GM10248 (cell line): ENCODE measurements at regions of chr12 and their contacts with region 1.

Region 1: GRCh38 chr12:15899282-15899870 is 11.8 kb upstream of the DERA start:
- DNase-seq: no peak
- CTCF ChIP-seq: peak; percentile 52

Region 2: DNA sequence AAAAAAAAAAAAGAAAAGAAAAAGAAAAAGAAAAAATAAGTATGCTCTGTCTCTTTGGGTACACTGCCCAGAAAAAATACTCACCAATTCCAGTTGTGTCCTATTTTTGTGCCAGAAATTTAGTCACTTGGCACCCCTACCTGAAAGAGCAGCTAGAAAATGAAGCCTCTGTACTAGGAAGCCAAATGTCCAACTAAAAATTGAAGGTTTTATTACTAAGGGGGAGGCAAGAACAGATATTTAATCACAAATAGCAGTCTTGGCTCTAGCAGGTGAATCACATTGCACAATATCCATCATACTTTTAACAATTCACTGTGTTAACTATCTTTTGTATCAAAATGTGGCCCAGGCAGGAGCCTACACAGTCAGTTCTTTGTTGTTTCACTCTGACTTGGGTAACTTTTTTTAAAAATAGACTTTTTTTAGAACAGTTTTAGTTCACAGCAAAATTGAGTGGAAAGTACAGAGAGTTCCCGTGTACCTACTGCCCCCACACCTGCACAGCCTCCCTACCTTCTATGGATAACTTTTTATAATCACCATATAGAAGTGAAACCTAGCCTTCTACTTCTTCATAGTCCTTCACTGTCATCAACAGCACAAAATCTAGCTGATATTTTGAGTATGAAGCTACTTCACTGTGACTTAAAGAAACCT is 1621.0 kb before region 1 on chr12:
- CTCF ChIA-PET with region 1: no interaction called
- POLR2A ChIA-PET with region 1: interaction called, 12 read pairs
- DNase-seq: peak; percentile 45
- CTCF ChIP-seq: no peak

Region 3: DNA sequence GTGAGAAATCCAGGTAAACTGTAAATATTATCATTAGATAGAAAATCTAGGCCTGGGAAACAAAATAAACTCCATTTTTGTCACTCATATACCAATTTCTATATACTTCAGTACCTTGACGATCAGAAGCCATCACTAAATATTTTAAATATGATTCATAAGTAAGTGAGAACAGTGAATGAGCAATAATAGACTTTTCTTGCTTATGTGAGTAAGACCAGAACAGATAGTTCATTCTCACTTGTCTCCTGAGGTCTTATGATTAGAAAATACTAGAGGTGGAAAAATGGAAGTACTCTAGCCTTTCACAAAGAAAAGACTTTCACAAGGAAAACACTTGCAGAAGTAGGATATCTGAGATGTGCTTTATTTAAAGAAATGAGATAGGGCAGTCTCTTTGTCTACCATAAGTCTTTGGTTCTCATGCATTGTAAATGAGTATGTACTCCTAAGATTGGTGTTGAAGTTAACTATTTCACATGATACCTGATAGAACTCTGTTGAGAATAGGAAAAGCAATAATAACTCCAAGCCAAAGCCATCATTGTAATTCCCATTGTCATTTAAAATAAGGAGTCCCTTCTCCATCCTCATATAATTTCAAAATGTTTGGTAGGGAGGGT is 1075.3 kb before region 1 on chr12:
- CTCF ChIA-PET with region 1: no interaction called
- POLR2A ChIA-PET with region 1: no interaction called
- DNase-seq: no peak
- CTCF ChIP-seq: no peak

Region 4: DNA sequence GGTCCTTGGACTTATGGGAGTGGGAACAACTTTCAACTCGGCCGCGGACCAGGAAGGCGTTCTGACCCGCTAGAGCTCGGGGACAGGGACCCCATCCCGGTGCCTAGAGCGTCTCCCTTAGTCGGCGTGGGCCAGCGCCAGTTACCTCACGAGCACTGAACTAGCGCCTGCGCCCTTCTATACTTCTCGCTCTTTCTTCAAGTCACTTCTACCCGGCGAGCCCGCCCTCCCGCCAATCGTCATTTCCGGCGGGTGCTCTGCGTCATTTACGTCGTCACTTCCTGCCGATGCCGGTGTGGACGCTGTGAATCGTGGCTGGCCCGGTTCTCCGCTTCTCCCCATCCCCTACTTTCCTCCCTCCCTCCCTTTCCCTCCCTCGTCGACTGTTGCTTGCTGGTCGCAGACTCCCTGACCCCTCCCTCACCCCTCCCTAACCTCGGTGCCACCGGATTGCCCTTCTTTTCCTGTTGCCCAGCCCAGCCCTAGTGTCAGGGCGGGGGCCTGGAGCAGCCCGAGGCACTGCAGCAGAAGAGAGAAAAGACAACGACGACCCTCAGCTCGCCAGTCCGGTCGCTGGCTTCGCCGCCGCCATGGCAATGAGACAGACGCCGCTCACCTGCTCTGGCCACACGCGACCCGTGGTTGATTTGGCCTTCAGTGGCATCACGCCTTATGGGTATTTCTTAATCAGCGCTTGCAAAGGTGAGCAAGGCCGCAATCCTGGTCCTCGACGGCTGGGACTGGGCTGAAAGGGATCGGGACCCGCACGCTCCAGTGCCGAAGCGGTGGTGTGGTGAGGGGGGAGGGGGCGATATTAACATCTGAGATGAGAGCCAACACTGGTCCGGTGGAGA is 17.0 kb before region 1 on chr12 and contains the start of gene STRAP:
- CTCF ChIA-PET with region 1: interaction called, 97 read pairs
- POLR2A ChIA-PET with region 1: interaction called, 3 read pairs
- DNase-seq: peak; percentile 96
- CTCF ChIP-seq: no peak

Region 5: DNA sequence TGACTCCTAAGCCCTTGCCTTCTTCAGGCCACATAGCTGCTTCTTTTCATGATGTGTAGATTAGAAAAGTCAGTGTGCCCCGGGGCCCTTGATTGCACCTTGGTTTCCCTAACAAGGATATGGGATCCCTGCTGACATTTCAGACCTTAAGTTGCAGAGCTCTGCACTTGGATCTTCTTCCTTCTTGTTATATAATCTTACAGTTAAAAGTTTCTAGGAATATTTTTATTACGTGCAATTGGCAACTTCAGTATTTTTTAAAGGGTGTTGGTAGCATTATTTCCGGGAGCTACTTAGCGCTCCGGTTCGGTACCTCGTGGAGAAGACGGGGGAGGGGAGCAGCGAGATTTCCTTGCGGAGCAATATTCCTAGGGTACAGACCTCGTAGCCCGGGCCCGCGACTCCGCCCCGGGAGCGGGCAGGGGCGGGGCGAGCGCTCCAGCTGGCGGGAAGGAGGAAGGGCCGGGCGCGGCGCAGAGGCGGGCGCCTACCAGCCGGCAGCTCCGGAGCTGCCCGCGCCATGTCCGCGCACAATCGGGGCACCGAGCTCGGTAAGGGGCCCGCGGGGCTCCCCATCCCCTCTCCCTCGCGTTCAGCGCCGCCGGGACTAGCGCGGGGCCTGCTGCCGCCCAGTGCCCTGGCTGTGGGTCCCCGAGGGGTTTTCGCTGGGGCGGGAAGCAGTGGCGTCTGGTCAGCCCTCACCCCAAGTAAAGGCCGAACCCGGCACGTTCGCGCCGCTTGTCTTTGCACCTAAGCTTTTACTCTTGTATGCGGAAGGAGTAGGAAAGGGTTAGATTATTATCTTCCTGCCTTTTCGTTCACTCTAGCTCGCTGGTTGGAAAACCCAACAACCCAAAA is 11.7 kb after region 1 on chr12 and contains the start of gene DERA:
- CTCF ChIA-PET with region 1: interaction called, 94 read pairs
- POLR2A ChIA-PET with region 1: no interaction called
- DNase-seq: peak; percentile 76
- CTCF ChIP-seq: no peak

Region 6: GRCh38 chr12:15919418-15919817 is 20.0 kb after region 1 on chr12:
- CTCF ChIA-PET with region 1: interaction called, 15 read pairs
- POLR2A ChIA-PET with region 1: no interaction called
- DNase-seq: no peak
- CTCF ChIP-seq: no peak